HAP-1 (cell line): ENCODE measurements at regions of chr2 and their contacts with region 1.

Region 1: DNA sequence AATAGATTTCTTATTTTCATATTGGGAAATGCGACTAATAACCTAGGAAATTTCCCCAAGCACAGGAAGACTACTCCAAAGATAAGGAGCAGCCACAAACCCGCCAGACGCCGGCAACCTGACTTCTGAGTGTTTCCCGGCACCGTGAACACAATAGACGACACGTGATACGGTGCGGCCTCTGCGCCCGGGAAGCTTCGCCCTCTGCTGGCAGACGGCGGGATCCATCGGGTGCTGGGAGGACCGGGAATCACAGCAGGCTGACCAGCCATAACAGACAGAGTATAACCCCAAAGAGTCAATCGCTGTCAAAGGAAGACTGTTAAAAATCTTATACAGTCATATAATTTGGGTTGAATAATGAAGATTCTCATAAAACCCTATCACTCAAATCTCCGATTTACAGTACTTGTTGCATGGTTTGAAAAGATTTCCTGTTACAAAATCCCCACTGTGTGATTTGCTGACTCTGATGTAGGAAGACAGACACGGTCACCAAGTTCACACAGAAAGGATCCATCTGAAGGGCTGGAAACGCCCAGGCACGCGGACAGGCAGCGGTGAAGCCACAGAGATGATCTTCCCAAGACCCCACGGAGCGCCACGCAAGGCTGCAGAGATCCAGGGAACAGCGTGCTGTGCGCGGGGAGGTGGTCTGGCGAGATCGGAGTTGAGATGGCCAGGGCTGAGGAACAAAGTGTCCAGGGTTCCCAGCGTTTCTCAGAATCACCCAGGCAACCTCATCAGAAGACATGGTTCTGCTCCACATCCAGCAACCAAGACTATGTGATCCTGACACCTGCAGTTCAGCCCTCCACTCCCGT is 73.8 kb downstream of the EIPR1 start:
- DNase-seq: peak; percentile 82 to 92
- H3K4me3 ChIP-seq: no peak overlapping the region
- H3K4me1 ChIP-seq: peaks cover 3% of the 10 kb centered on the region; the same call in 1 of the 2 replicates
- H3K27me3 ChIP-seq: no peaks in the 10 kb centered on the region

Region 2: DNA sequence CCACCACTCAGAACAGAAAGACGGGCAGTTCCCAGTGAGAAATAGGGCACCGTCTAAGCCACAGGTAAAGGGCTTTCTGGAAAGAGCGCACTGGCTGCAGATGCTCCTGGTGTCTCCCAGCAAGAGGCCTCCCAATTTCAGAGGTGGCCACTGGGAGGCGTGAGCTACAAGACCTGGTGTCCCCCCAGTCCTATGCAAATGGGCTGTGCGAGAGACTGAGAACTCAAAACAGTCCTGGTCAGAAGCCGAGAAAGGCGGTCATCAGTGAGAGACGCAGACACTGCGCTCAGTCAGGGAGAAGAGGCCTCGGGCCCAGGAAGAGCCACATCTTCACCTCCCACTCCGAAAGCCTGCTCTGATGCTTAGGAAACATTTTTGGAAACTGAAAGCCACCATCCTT is 105.7 kb before region 1 on chr2:
- in situ Hi-C with region 1: loop called (anchors 10 kb)
- DNase-seq: peak; percentile 9 to 66
- H3K4me3 ChIP-seq: no peak overlapping the region
- H3K4me1 ChIP-seq: no peaks in the 10 kb centered on the region
- H3K27me3 ChIP-seq: no peaks in the 10 kb centered on the region

Region 3: DNA sequence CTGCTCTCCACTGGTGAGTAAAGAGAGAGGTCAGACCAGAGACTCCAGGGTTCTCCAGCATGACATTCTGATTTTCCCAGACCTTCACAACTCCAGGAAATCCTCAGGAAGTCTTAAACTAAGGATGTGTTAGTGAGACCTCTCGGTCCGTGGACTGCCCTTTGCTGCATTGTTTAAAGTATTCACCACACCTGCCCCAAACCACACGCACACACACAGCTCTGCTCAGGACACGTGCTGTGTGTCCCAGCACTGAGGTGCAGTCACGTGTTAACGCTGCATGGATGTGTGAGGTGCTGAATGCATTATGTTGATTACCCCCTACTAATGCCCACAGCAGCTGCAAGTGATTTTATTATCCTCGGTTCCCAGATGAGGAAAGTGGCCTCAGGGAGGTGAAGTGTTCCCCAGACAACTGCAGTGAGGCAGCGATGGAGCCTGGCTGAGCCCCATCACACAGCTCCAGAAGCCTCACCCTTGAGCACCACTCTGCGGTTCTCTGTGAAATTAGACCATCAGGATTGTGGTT is 144.1 kb after region 1 on chr2:
- in situ Hi-C with region 1: no loop called
- DNase-seq: no peak
- H3K4me3 ChIP-seq: no peak overlapping the region
- H3K4me1 ChIP-seq: no peaks in the 10 kb centered on the region
- H3K27me3 ChIP-seq: no peaks in the 10 kb centered on the region